ENCODE measurements at regions of chr11 and their contacts with region 1.

Region 1: DNA sequence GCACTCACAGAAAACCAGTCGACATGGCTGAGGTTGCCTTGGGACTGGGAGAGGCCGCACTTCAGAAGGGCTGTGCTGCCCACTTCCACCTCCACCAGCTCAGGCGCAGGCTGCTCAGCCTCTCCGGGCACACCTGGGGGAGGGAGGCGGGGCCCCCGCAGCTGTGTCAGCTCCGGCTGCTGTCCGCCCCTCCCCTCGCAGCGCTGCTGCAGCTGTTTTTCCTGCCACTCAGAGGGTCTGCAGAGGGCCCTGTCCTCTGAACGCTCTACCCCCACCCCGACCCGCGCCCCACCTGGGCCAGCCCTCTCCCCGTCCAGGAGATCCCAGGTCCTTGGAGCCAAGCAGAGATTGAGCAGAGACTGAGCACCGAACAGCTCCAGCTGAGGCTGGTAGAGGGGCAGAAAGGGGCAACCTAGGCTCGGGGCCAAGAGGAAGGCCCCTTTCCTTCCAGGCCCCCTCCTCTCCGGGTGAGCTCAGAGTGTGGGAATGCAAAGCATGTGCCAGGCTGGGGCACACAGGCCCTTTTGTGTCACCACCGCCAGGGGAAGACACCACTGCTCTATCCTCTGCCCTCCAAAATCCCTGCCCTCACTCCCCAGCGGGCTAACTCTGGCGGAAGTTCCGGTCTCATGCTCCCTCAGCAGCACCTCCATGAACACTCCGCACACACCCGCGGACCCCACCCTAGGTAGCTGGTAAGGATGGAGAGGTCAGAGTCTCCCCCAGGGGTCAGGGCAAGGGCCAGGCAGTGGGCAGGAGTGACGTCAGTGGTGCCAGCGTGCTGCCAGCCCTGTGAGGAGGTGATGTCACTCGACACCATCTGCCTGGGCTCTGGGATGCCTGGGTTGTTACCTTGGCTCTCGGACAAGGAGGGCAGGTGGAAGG is 1.6 kb downstream of the MCAM start:
- DNase-seq: peak in 7 of 9 experiments; percentile 45 to 73 (median 60)
- ATAC-seq: peak; percentile 66
- H3K4me3 ChIP-seq: peak overlapping the region; percentile 43 to 67
- H3K4me3 Mint-ChIP-seq: peak overlapping the region; percentile 76
- H3K27ac ChIP-seq: no peak overlapping the region
- H3K27ac Mint-ChIP-seq: no peak overlapping the region
- H3K4me1 ChIP-seq: peaks cover 27% of the 10 kb centered on the region
- H3K4me1 Mint-ChIP-seq: peaks cover 27% of the 10 kb centered on the region
- H3K27me3 ChIP-seq: peaks cover 12 to 25% of the 10 kb centered on the region in 2 experiments
- H3K27me3 Mint-ChIP-seq: peaks cover 7% of the 10 kb centered on the region
- CTCF ChIP-seq: no peak

Region 2: GRCh38 chr11:119339589-119340343 is 24.4 kb after region 1 on chr11:
- CTCF ChIA-PET with region 1: interaction called, 103 read pairs
- POLR2A ChIA-PET with region 1: no interaction called
- intact Hi-C with region 1: loop called in 1 of 2 experiments (anchors 1 kb)
- DNase-seq: peak in 5 of 9 experiments; percentile 26 to 53 (median 46)
- ATAC-seq: no peak
- H3K4me3 ChIP-seq: peak overlapping the region in 1 of 2 experiments; percentile 37
- H3K4me3 Mint-ChIP-seq: peak overlapping the region; percentile 45
- H3K27ac ChIP-seq: no peak overlapping the region
- H3K27ac Mint-ChIP-seq: no peak overlapping the region
- H3K4me1 ChIP-seq: peaks cover 21% of the 10 kb centered on the region
- H3K4me1 Mint-ChIP-seq: peaks cover 27% of the 10 kb centered on the region
- H3K27me3 ChIP-seq: peaks cover 28 to 30% of the 10 kb centered on the region in 2 experiments
- H3K27me3 Mint-ChIP-seq: peaks cover 37% of the 10 kb centered on the region
- CTCF ChIP-seq: peak; percentile 60

Region 3: GRCh38 chr11:119550053-119550752 is 234.8 kb after region 1 on chr11:
- CTCF ChIA-PET with region 1: no interaction called
- POLR2A ChIA-PET with region 1: no interaction called
- intact Hi-C with region 1: no loop called
- DNase-seq: no peak
- ATAC-seq: no peak
- H3K4me3 ChIP-seq: no peak overlapping the region
- H3K4me3 Mint-ChIP-seq: no peak overlapping the region
- H3K27ac ChIP-seq: no peak overlapping the region
- H3K27ac Mint-ChIP-seq: no peak overlapping the region
- H3K4me1 ChIP-seq: no peaks in the 10 kb centered on the region
- H3K4me1 Mint-ChIP-seq: no peaks in the 10 kb centered on the region
- H3K27me3 ChIP-seq: no peaks in the 10 kb centered on the region
- H3K27me3 Mint-ChIP-seq: peaks cover 3% of the 10 kb centered on the region
- CTCF ChIP-seq: no peak